MCF 10A (cell line): ENCODE measurements at regions of chr3 and their contacts with region 1.

Region 1: GRCh38 chr3:131835906-131836305 is 198.9 kb downstream of the CPNE4 start:
- DNase-seq: no peak
- H3K4me3 Mint-ChIP-seq: no peak overlapping the region
- H3K27ac Mint-ChIP-seq: no peak overlapping the region
- H3K4me1 Mint-ChIP-seq: no peaks in the 10 kb centered on the region
- H3K27me3 Mint-ChIP-seq: no peaks in the 10 kb centered on the region
- CTCF ChIP-seq: no peak

Region 2: DNA sequence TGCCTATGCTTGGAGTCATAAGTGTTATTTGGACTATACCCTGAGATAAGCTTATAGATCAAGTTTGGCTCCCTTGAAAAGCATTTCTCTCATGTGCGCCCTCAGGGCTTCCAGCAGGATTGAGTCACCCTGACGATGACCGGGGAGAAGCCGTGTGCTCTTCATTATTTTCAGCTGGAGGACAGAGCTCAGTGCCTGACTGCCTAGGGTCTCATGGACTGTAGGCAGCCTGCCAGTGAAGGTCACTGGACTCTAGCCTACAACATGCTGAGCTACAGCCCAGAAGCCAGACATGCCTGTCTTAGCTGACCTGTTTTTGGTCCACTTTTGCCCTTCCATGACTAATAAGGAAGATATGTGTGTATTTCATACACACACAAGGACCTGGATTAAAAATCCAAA is 486.0 kb before region 1 on chr3:
- CTCF ChIA-PET with region 1: no interaction called
- POLR2A ChIA-PET with region 1: no interaction called
- intact Hi-C with region 1: no loop called
- DNase-seq: peak; percentile 73
- H3K4me3 Mint-ChIP-seq: no peak overlapping the region
- H3K27ac Mint-ChIP-seq: peak overlapping the region; percentile 61
- H3K4me1 Mint-ChIP-seq: peaks cover 26% of the 10 kb centered on the region
- H3K27me3 Mint-ChIP-seq: no peaks in the 10 kb centered on the region
- CTCF ChIP-seq: no peak

Region 3: DNA sequence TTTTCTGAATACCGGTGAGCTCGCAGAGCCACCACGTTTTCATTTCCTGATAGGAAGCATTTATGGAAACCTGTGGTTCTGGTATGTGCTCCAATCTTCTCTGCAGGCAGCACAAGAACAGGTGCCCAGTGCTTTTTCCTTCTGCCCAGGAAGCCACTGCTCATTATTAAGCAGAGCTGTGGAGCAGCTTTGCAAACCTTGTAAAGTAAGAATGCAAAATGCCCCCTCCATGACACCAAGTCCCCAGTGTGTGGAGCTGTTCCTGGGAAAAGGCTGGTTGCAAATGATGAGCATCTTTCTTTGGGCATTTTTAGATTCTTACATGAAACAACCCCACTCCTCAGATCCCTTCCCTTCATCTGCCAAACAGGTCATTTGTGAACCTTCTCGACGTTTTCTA is 267.4 kb before region 1 on chr3:
- CTCF ChIA-PET with region 1: no interaction called
- POLR2A ChIA-PET with region 1: no interaction called
- intact Hi-C with region 1: loop called (anchors 5 kb)
- DNase-seq: no peak
- H3K4me3 Mint-ChIP-seq: no peak overlapping the region
- H3K27ac Mint-ChIP-seq: no peak overlapping the region
- H3K4me1 Mint-ChIP-seq: no peaks in the 10 kb centered on the region
- H3K27me3 Mint-ChIP-seq: peaks cover 44% of the 10 kb centered on the region
- CTCF ChIP-seq: no peak

Region 4: GRCh38 chr3:132117642-132118041 is 281.7 kb after region 1 on chr3:
- CTCF ChIA-PET with region 1: no interaction called
- POLR2A ChIA-PET with region 1: no interaction called
- intact Hi-C with region 1: no loop called
- DNase-seq: no peak
- H3K4me3 Mint-ChIP-seq: no peak overlapping the region
- H3K27ac Mint-ChIP-seq: no peak overlapping the region
- H3K4me1 Mint-ChIP-seq: no peaks in the 10 kb centered on the region
- H3K27me3 Mint-ChIP-seq: no peaks in the 10 kb centered on the region
- CTCF ChIP-seq: no peak

Region 5: DNA sequence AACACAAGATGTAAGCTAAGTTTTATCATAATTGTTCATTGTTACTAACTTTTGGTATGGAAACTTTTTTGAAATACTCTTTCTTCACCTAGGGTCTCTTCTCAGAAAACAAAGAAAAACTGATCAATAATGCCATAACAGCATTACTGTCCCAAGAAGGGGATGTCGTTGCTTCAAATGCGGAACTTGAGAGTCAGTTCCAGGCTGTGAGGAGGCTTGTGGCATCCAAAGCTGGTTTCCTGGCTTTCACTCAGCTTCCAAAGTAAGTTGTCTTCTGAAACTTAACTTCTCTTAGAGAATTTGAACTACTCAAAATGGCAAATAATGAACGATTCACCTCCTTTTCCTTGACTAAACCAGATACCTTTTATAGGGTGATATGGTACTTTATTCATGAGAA is 620.7 kb after region 1 on chr3:
- CTCF ChIA-PET with region 1: no interaction called
- POLR2A ChIA-PET with region 1: no interaction called
- intact Hi-C with region 1: no loop called
- DNase-seq: no peak
- H3K4me3 Mint-ChIP-seq: no peak overlapping the region
- H3K27ac Mint-ChIP-seq: no peak overlapping the region
- H3K4me1 Mint-ChIP-seq: no peaks in the 10 kb centered on the region
- H3K27me3 Mint-ChIP-seq: no peaks in the 10 kb centered on the region
- CTCF ChIP-seq: no peak